Sciatic nerve (tissue), 2 donors: ENCODE measurements at regions of chr10 and their contacts with region 1.

Region 1: DNA sequence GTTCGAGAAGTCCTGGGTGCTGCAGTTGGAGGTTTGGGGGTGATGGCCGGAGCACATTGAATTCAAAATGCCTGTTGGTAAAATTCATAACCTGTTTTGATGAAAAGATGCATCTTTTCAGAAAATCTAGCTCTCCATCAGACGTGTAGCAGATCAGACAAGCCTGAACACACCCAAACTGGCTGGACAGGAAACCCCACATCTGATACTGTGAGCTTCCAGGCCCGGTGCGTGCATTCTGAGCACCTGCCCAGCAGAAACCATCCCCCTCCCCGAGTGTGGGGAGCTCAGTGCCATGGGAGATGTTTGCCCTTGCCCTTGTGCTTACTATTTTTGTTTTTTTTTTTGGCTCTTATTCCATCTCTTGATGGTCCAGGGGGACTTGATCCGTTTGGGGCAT is 417.1 kb downstream of the TCERG1L start:
- DNase-seq: no peak
- ATAC-seq: no peak

Region 2: DNA sequence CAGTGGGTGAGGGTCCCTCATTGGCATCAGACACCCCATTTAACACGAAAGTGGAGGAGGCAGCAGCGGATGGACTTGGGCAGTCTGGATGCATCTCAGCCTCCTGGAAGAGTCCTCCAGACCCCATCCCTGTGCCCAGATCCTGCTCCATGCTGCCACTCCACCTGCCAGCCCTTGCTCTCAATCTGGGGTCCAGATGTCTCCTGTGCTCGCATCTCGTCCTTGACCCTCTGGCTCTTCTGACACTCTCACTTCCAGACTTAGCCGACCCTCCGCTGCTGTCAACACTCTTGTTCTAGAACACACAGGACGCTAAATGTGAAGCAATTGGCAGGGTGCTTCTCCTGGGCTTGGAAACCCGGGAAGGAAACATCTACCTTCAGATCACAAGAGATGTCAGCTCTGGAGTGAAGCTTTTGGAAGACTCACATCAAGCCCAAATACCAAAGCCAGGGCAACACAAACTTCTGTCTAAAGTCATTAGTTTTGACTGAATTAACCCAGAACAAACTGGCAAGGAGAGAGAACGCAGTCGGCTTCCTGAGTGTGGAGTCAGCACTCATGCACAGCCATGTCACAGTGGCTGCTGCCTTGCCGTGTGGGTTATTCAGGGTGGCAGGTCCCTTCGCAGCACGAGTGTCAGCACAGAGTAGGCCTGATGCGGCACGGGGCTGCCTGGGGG is 38.0 kb after region 1 on chr10:
- intact Hi-C with region 1: loop called (anchors 1 kb)
- DNase-seq: no peak
- ATAC-seq: no peak

Region 3: DNA sequence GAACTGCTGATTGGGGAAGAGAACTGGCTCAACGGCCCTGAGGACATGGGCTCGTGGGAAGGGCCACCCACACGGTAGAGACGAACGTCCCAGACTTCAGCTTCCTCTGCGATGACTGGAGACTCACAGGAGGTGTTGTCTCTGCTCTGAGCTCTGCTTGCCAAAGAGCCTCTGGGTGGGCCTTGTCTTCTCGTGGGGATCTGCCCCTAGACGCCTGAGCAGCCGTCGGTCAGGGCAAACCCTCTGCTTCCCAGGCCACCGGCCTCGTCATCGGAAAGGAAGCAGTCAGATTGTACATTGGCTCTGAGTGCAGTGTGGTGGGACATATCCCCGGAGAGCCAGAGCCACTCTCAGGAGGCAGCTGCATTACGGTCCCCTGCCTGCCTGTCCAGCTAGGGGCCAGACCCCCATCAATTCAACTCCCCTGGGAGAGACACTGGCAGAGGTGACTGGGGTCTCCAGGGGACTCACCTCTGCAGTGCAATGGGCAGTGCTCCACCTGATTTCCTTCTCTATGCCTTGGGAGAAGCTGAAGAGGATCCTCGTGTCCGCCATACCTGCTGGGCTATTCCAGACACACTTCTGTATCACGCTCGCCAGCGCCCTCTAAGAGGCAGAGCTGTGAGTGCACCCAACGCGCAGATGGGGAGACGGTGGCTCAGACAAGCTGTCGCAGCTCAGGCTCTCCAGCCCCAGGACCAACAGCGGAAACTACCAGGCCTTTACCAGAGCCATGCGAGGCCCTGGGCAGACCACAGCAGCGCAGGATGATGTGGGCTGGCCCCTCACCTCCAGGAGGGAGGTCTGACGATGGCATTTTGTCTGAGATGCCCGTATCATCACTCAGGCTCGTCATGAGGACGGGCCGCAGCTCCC is 189.7 kb after region 1 on chr10:
- intact Hi-C with region 1: no loop called
- DNase-seq: peak; percentile 48
- ATAC-seq: no peak